Uterus (tissue), 4 donors: ENCODE measurements at regions of chr6 and their contacts with region 1.

Region 1: GRCh38 chr6:28322661-28323060 is 13.3 kb downstream of the ZSCAN31 start:
- DNase-seq: no peak
- H3K4me3 ChIP-seq: no peak overlapping the region
- H3K27ac ChIP-seq: no peak overlapping the region
- H3K4me1 ChIP-seq: no peaks in the 10 kb centered on the region
- H3K27me3 ChIP-seq: no peaks in the 10 kb centered on the region
- CTCF ChIP-seq: no peak
- POLR2A ChIP-seq: no peak

Region 2: GRCh38 chr6:28277746-28278145 is 44.9 kb before region 1 on chr6:
- intact Hi-C with region 1: loop called (anchors 10 kb)
- DNase-seq: no peak
- H3K4me3 ChIP-seq: no peak overlapping the region
- H3K27ac ChIP-seq: no peak overlapping the region
- H3K4me1 ChIP-seq: no peaks in the 10 kb centered on the region
- H3K27me3 ChIP-seq: no peaks in the 10 kb centered on the region
- CTCF ChIP-seq: no peak
- POLR2A ChIP-seq: no peak

Region 3: GRCh38 chr6:28443112-28443773 is 120.6 kb after region 1 on chr6 and contains the start of gene ZSCAN23:
- intact Hi-C with region 1: no loop called
- DNase-seq: peak; percentile 77 to 79
- H3K4me3 ChIP-seq: peak within 1 kb of the TSS; percentile 51 to 67
- H3K27ac ChIP-seq: peak within 1 kb of the TSS; percentile 39 to 70
- H3K4me1 ChIP-seq: peaks cover 0 to 4% of the 10 kb centered on the region in 2 donors
- H3K27me3 ChIP-seq: peaks cover 3 to 8% of the 10 kb centered on the region in 2 donors
- CTCF ChIP-seq: no peak
- POLR2A ChIP-seq: no peak
- total RNA-seq, gene ZSCAN23: 0.26 to 21.3 (median 7.5) TPM in 3 of 4 donors, not detected in the other